ENCODE measurements at regions of chr11 and their contacts with region 1.

Region 1: DNA sequence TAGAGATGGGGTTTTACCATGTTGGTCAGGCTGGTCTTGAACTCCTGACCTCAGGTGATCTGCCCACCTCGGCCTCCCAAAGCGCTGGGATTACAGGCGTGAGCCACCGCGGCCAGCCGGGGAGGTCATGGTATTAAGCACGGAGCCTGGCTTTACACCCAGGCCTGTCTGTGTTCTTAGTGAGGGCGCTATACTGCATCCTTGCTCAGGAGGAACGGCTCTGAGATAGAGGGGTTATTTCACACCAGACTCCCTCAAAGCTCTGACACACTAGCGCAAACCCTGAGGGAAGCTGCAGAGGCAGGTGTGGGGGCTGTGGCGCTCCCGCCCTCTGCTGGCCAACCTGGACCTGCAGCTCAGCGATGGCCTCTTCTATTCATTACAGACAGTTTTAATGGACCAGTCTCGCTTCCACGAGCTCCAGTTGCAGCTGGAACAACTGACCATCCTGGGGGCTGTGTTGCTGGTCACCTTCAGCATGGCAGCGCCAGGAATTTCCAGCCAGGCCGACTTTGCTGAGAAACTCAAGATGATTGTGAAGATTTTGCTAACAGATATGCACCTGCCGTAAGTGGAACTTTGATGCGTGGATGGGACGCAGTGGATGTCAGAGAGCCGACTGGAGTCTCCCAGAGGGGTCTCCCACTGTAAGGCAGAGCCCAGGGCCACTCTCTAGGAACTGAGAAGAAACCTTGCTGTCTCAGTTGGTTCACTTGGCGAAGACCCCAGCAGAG is 26.2 kb downstream of the TCP11L1 start:
- DNase-seq: peak; percentile 56 to 77
- ATAC-seq: peak; percentile 77 to 82
- H3K4me3 ChIP-seq: no peak overlapping the region
- H3K27ac ChIP-seq: peak overlapping the region; percentile 85 to 88; a peak in 5 of 6 replicates
- H3K4me1 ChIP-seq: peaks cover 46% of the 10 kb centered on the region
- CTCF ChIP-seq: peak; percentile 88
- EP300 ChIP-seq: no peak
- POLR2A ChIP-seq: no peak
- RAD21 ChIP-seq: peak; percentile 95

Region 2: GRCh38 chr11:32983506-32983905 is 82.1 kb before region 1 on chr11:
- CTCF ChIA-PET with region 1: interaction called, 12 read pairs
- POLR2A ChIA-PET with region 1: no interaction called
- DNase-seq: no peak
- ATAC-seq: no peak
- H3K4me3 ChIP-seq: no peak overlapping the region
- H3K27ac ChIP-seq: no peak overlapping the region
- H3K4me1 ChIP-seq: peaks cover 28% of the 10 kb centered on the region
- CTCF ChIP-seq: no peak
- EP300 ChIP-seq: no peak
- POLR2A ChIP-seq: no peak
- RAD21 ChIP-seq: no peak

Region 3: DNA sequence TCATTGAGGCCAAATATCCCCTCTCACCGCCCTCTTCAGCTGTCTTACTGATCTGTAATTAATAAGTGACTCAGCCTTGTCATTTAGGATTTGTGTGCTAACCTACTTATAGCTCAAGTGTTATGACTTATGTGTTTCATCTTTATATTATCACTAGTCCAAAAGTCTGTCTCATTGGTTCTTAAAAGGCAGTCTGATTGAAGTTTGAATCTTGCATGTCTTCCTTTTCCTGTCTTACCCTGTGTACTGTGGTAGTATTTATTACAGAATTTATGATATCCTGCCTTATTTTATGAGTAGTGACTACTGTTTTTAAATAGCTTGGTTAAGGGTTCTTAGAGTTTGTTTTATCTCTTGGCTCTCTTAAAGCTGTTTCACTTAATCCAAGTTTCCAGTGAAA is 43.7 kb before region 1 on chr11:
- CTCF ChIA-PET with region 1: interaction called, 11 read pairs
- POLR2A ChIA-PET with region 1: no interaction called
- DNase-seq: no peak
- ATAC-seq: no peak
- H3K4me3 ChIP-seq: no peak overlapping the region
- H3K27ac ChIP-seq: no peak overlapping the region
- H3K4me1 ChIP-seq: peaks cover 28% of the 10 kb centered on the region
- CTCF ChIP-seq: no peak
- EP300 ChIP-seq: no peak
- POLR2A ChIP-seq: no peak
- RAD21 ChIP-seq: no peak

Region 4: GRCh38 chr11:33039274-33040032 is 26.2 kb before region 1 on chr11 and contains the start of gene TCP11L1:
- CTCF ChIA-PET with region 1: interaction called, 76 read pairs
- POLR2A ChIA-PET with region 1: interaction called, 34 read pairs
- DNase-seq: peak; percentile 70 to 96
- ATAC-seq: peak; percentile 88 to 89
- H3K4me3 ChIP-seq: peak within 1 kb of the TSS; percentile 69
- H3K27ac ChIP-seq: peak within 1 kb of the TSS; percentile 91 to 96
- H3K4me1 ChIP-seq: peaks cover 42% of the 10 kb centered on the region
- CTCF ChIP-seq: no peak
- EP300 ChIP-seq: no peak
- POLR2A ChIP-seq: peak; percentile 52
- RAD21 ChIP-seq: peak in 1 of 2 experiments; percentile 13; a peak in 2 of 5 replicates
- polyA plus RNA-seq, gene TCP11L1: 42.1 and 43.0 TPM in 2 replicates

Region 5: GRCh38 chr11:33052231-33052630 is 13.4 kb before region 1 on chr11:
- CTCF ChIA-PET with region 1: interaction called, 76 read pairs
- POLR2A ChIA-PET with region 1: no interaction called
- DNase-seq: no peak
- ATAC-seq: no peak
- H3K4me3 ChIP-seq: no peak overlapping the region
- H3K27ac ChIP-seq: peak overlapping the region in 1 of 2 experiments; percentile 28; a peak in 1 of 6 replicates
- H3K4me1 ChIP-seq: peaks cover 85% of the 10 kb centered on the region
- CTCF ChIP-seq: no peak
- EP300 ChIP-seq: no peak
- POLR2A ChIP-seq: no peak
- RAD21 ChIP-seq: no peak

Measured in A549 (cell line).